H1 (cell line): ENCODE measurements at regions of chrX and their contacts with region 1.

Region 1: DNA sequence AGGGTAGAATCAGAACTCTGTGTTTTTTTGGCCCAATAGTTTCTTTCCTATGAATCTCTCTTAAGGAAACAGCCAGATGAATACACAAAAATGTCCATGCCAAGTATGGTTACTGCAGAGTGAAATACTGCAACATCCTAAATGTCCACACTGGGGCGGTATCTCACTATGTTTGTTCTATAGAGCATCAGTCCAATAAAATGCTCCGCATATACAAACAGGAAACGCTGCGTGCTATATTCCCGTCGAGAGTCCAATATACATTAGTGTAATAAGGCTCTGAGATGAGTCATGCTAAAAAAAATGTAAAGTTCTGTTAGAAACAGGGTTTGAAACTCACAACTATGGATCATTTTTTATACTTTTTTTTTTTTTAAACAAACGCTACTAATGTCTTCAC is 72.9 kb upstream of the ENOX2 start:
- DNase-seq: peak in 1 of 2 experiments; percentile 45
- H3K4me3 ChIP-seq: no peak overlapping the region
- H3K27ac ChIP-seq: no peak overlapping the region
- H3K4me1 ChIP-seq: no peaks in the 10 kb centered on the region
- H3K27me3 ChIP-seq: no peaks in the 10 kb centered on the region
- CTCF ChIP-seq: peak in 2 of 3 experiments; percentile 46 to 49; a peak in 3 of 4 replicates
- EP300 ChIP-seq: no peak
- POLR2A ChIP-seq: no peak
- RAD21 ChIP-seq: peak; percentile 74 to 80

Region 2: DNA sequence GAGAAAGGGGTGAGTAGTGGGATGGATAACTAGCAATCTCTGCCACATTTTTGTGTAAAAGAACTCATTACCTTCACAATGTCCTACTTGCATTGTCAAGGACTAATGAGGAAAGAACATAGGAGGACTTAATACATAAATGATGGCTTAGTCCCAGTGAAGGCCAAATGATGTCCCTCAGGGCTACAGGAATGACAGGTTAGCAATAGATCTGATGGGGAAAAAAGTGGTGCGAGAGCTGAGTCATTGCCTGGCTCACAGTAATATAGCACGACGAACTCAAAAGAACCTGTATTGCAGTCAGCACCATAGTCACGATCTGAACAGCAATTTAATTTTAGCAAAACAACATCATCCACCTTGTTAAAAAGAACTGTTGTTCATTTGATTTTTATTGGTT is 11.3 kb after region 1 on chrX:
- CTCF ChIA-PET with region 1: no interaction called
- POLR2A ChIA-PET with region 1: no interaction called
- DNase-seq: no peak
- H3K4me3 ChIP-seq: no peak overlapping the region
- H3K27ac ChIP-seq: no peak overlapping the region
- H3K4me1 ChIP-seq: no peaks in the 10 kb centered on the region
- H3K27me3 ChIP-seq: no peaks in the 10 kb centered on the region
- CTCF ChIP-seq: no peak
- EP300 ChIP-seq: no peak
- POLR2A ChIP-seq: no peak
- RAD21 ChIP-seq: no peak

Region 3: GRCh38 chrX:131677655-131678628 is 702.0 kb after region 1 on chrX:
- CTCF ChIA-PET with region 1: interaction called, 30 read pairs
- POLR2A ChIA-PET with region 1: no interaction called
- DNase-seq: peak; percentile 17 to 70
- H3K4me3 ChIP-seq: no peak overlapping the region
- H3K27ac ChIP-seq: no peak overlapping the region
- H3K4me1 ChIP-seq: no peaks in the 10 kb centered on the region
- H3K27me3 ChIP-seq: no peaks in the 10 kb centered on the region
- CTCF ChIP-seq: peak; percentile 67 to 72 (median 70)
- EP300 ChIP-seq: no peak
- POLR2A ChIP-seq: no peak
- RAD21 ChIP-seq: peak; percentile 79 to 84